GM13977 (cell line): ENCODE measurements at regions of chr1 and their contacts with region 1.

Region 1: DNA sequence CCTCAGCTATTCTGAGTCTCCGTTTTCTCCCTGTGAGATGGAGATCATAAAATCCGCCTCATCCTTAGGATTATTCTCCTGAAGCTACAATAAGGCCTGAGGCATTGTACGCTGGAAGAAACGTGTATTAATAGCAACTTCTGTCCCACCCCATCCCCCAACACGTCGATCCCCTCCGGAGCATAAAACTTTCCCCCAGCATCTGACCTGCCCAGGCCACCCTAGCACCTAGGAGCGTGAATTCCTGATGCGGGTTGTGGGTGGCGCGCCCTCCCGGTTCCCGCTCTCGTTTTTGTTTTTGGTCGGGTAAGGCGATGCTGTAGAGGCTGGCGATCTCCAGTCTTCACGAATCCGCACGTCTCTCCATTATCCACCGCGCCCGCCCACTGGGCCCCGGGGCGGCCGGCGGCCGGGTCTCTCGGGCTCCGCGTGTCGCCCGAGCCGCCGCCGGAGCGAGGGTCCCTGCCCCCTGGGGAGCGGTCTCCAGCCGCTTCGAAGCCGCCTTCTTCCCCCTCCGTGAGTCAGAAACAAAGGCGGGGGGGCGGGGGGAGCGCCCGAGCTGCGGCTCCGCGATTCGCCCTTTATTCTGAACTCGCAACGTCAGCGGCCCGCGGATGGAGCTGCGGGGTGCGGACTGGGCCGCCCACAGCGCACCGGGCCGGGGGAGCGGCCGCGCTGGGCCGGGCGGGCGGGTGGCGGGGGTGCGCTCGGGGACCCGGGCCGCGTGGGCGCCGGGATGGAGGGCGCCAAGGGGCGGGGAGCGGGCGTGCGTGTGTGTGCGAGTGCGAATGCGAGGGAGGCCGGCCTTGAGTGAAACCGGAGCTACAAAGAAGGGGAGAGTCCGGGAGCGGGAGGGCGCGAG is at the start of gene PLEKHO1:
- DNase-seq: peak; percentile 90
- CTCF ChIP-seq: no peak

Region 2: GRCh38 chr1:149843431-149844087 is 305.9 kb before region 1 on chr1:
- in situ Hi-C with region 1: no loop called
- DNase-seq: no peak
- CTCF ChIP-seq: no peak

Region 3: DNA sequence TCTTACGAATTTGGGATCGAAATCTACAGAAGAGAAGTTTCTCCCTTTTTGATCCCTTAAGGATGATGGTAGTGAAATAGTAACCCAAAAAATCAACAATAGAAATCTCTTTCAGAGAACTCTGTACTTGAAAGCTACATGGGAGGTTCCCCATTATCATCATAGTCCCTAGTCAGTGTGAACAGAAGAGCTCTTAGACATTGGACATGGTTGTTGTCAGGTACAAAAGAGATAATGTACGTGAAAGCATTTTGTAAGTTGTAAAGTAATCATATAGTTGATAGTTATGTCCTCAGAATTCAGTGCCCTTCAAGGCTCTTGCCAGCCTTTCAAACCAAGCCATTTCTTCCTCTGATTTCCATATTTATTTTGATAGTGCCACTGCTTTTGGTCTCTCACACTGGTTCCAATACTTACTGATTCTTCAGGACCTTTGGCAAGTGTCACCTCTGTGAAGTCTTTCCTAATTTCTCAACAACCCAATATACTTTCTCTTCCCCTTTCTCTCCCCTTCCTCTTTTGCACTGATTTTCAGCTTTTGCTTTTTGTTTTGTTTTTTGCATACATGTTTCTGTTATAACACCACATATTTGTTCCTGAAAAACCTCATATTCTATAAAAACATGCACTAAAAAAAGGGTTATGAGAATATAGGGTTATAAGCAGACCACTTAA is 59.5 kb before region 1 on chr1:
- in situ Hi-C with region 1: loop called (anchors 10 kb)
- DNase-seq: no peak
- CTCF ChIP-seq: no peak

Region 4: GRCh38 chr1:150235852-150236613 is 86.5 kb after region 1 on chr1 and contains the start of gene ANP32E:
- in situ Hi-C with region 1: no loop called
- DNase-seq: peak; percentile 98
- CTCF ChIP-seq: no peak

Region 5: DNA sequence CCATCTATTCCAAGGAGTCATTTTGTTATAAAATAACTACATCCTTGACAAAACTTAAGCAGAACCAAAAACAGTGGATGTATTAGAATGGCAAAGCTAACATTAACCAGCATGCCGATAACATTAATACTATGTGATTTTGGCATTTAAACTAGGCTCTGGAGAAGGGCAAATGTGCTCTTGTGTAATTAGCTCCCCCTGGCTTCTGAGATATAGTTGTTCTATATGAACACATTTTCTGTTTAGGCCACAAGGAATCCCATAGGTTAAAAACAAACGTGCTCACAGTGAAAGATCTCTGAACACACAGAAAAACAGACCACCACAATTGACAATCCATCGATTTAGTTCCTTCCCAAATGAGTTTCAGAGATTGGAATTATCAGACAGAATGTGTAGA is 280.3 kb after region 1 on chr1:
- in situ Hi-C with region 1: no loop called
- DNase-seq: peak; percentile 27
- CTCF ChIP-seq: peak; percentile 33